Activated CD4-positive, alpha-beta T cell treated with anti-CD3 and anti-CD28 coated beads for 36 hours (primary cell): ENCODE measurements at regions of chr12 and their contacts with region 1.

Region 1: DNA sequence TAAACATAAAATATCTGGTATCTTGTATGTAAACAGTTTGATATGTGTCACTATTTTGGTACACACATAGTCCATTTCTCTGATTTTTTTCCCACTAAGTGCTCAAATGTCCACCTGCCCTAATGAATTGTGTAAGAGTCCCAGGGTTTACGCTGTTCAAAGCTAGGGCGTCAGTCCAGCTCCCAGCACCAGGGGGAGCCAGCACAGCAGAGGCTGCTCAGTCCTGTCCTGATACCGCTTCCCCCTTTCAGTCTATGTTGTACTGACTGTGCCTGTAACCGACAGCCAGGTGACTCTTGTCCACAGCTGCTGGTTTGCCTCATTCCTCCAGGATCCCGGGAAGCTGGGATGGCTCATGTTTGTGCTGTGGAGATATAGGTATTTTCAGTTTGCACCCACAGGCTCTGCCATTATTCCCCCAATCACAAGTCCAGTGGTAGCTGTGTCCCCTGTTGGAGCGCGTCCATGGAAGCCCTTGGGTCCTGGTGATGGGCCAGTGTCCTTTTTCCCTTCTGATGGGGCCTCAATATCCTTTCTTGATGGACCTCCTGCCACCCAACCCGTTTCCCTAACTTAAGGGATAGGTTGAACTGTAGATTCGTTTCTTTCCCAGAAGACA is 242.0 kb downstream of the NEDD1 start:
- DNase-seq: peak; percentile 75
- ATAC-seq: peak; percentile 93
- H3K4me3 Mint-ChIP-seq: no peak overlapping the region
- H3K27ac Mint-ChIP-seq: no peak overlapping the region
- H3K4me1 Mint-ChIP-seq: no peaks in the 10 kb centered on the region
- H3K27me3 Mint-ChIP-seq: peaks cover 16% of the 10 kb centered on the region

Region 2: DNA sequence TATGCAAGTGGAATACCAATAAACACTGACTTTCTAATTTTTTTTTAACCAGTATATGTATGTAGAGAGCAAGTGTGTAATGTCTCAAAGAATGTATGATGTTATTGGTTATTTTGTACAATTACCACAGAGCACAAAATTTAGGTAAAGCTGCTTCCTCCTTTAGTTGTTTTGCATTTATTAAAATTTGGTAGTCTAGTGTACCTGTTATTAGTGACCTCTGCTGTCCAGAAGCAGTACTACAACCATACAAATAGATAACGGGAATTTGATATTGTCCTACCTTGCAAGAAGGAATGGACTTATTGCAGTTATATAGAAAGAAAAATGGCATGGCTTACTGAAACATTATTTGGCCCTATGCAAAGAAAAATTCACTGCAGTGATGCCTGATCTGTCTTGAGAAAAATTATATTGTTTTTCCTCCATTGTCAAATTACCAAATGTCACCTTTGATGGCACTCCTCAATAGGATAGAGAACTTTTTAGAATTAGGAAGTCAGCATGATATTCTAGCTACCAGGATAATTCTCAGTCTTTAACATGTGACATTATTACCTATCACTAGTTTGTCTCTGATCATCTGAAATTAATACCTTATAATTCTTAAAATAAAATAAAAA is 159.6 kb after region 1 on chr12:
- CTCF ChIA-PET with region 1: interaction called, 12 read pairs
- POLR2A ChIA-PET with region 1: no interaction called
- intact Hi-C with region 1: loop called (anchors 1 to 2 kb)
- DNase-seq: no peak
- ATAC-seq: no peak
- H3K4me3 Mint-ChIP-seq: no peak overlapping the region
- H3K27ac Mint-ChIP-seq: no peak overlapping the region
- H3K4me1 Mint-ChIP-seq: no peaks in the 10 kb centered on the region
- H3K27me3 Mint-ChIP-seq: peaks cover 5% of the 10 kb centered on the region

Region 3: GRCh38 chr12:97404543-97404942 is 255.5 kb after region 1 on chr12:
- CTCF ChIA-PET with region 1: interaction called, 3 read pairs
- POLR2A ChIA-PET with region 1: no interaction called
- intact Hi-C with region 1: loop called in 1 of 2 experiments (anchors 5 kb)
- DNase-seq: peak; percentile 25
- ATAC-seq: no peak
- H3K4me3 Mint-ChIP-seq: no peak overlapping the region
- H3K27ac Mint-ChIP-seq: no peak overlapping the region
- H3K4me1 Mint-ChIP-seq: no peaks in the 10 kb centered on the region
- H3K27me3 Mint-ChIP-seq: no peaks in the 10 kb centered on the region

Region 4: DNA sequence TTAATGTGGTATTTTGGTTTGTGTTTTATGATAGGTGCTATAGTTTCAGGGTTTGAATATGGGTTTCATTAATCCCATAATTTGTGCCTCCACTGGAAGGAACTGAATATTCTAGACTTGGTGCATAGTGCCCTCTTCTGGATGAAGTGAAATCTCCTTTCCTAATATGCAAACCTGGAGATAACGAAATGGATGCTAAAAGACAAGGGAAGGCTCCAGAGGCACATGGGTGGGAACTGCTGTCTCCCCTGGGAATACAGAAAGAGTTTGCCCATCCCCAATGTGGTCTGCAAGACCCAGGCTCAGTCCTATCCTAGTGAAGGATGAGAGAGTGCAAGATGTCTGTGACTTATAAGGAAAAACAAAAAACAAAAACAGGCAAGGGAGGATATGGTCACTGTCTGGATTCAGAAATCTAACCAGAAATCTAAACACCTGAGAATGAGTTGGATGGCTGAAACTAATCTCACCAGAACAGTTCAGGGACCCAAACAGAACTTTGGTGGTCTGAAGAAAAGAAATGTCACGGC is 1224.0 kb after region 1 on chr12:
- CTCF ChIA-PET with region 1: interaction called, 4 read pairs
- POLR2A ChIA-PET with region 1: no interaction called
- intact Hi-C with region 1: loop called in 1 of 2 experiments (anchors 2 kb)
- DNase-seq: no peak
- ATAC-seq: no peak
- H3K4me3 Mint-ChIP-seq: no peak overlapping the region
- H3K27ac Mint-ChIP-seq: no peak overlapping the region
- H3K4me1 Mint-ChIP-seq: peaks cover 12% of the 10 kb centered on the region
- H3K27me3 Mint-ChIP-seq: peaks cover 12% of the 10 kb centered on the region

Region 5: DNA sequence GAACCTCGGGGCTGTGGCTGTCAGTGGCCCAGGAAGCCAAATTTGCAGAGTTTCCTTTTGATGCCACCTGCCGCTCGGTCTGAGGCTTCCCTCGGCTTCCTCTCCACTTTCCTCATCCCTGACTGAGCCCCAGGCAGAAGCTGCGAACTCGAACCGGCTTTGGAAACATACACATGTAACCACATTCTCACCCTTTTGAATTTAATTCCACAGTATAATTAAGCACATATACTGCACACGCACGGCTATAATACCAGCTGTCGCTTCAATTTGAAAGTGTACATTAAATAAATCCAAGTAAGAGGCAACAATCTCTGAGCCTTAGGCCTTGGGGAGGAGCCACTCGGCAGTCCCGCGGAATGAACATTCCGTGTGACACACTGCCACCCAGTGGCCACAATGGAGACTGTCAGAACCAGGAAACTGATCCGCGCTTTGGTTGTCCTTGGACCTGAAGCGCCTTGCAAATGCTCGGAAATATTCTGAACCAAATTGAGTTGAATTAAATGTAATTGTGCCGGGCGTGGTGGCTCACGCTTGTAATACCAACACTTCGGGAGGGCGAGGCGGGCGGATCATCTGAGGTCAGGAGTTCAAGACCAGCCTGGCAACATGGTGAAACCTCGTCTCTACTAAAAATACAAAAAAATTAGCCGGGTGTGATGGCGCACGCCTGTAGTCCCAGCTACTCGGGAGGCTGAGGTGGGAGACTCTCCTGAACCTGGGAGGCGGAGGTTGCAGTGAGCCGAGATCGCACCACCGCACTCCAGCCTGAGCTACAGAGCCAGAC is 1248.5 kb after region 1 on chr12:
- CTCF ChIA-PET with region 1: interaction called, 5 read pairs
- POLR2A ChIA-PET with region 1: no interaction called
- intact Hi-C with region 1: loop called in 1 of 2 experiments (anchors 1 kb)
- DNase-seq: peak; percentile 89
- ATAC-seq: peak; percentile 92
- H3K4me3 Mint-ChIP-seq: peak overlapping the region; percentile 65
- H3K27ac Mint-ChIP-seq: peak overlapping the region; percentile 55
- H3K4me1 Mint-ChIP-seq: peaks cover 30% of the 10 kb centered on the region
- H3K27me3 Mint-ChIP-seq: no peaks in the 10 kb centered on the region

Region 6: GRCh38 chr12:98544751-98545150 is 1395.7 kb after region 1 on chr12:
- CTCF ChIA-PET with region 1: no interaction called
- POLR2A ChIA-PET with region 1: no interaction called
- intact Hi-C with region 1: no loop called
- DNase-seq: no peak
- ATAC-seq: no peak
- H3K4me3 Mint-ChIP-seq: no peak overlapping the region
- H3K27ac Mint-ChIP-seq: no peak overlapping the region
- H3K4me1 Mint-ChIP-seq: peaks cover 2% of the 10 kb centered on the region
- H3K27me3 Mint-ChIP-seq: no peaks in the 10 kb centered on the region